Activated CD4-positive, alpha-beta T cell treated with anti-CD3 and anti-CD28 coated beads for 36 hours (primary cell): ENCODE measurements at regions of chr7 and their contacts with region 1.

Region 1: DNA sequence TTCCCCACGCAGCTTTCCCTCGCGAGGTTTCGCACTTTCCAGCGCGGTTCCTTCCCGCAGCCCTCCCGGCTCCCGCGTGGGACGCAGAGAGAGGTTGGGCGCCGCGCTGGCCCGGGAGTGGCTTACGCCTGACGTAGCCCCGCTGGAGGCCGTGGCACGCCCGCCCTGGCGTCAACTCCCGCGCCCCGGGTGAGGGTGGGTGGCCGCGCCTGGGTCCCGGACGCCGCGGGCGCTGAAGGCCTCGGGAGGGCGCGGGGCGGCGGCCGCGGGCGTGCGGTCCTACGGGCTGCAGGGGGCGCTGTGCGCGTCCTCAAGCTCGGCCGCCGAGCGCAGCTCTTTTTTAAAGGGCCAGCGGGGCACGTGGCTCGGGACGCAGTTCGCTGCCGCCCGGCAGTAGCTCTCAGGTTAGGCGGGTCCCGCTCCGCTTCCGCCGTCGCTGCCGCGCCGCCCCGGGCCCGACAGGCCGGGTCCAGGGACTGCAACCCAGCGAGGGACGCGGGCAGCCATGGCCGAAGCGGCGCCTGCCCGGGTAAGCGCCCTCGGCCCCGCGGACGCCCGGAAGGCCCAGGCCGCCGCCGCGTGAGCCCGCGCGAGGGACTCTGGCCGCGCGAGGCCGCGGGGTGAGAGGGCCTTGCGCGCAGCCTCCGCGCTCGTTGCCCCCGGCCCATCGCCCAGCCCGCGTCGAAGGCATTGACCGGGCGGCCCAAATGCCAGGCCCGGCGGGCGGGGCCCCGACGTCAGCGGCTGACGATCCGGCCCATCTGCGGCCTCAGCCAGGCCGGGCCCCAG is at the start of gene ZNF783:
- DNase-seq: peak; percentile 92
- ATAC-seq: peak; percentile 84
- H3K4me3 Mint-ChIP-seq: peak within 1 kb of the TSS; percentile 74
- H3K27ac Mint-ChIP-seq: peak within 1 kb of the TSS; percentile 96
- H3K4me1 Mint-ChIP-seq: peaks cover 40% of the 10 kb centered on the region
- H3K27me3 Mint-ChIP-seq: no peaks in the 10 kb centered on the region
- total RNA-seq, gene ZNF783: 14.5 to 15.4 TPM

Region 2: GRCh38 chr7:149090397-149091195 is 171.4 kb before region 1 on chr7 and contains the start of gene ZNF786:
- CTCF ChIA-PET with region 1: no interaction called
- POLR2A ChIA-PET with region 1: no interaction called
- intact Hi-C with region 1: loop called in 1 of 2 experiments (anchors 2 kb)
- DNase-seq: peak; percentile 97
- ATAC-seq: peak; percentile 87
- H3K4me3 Mint-ChIP-seq: peak within 1 kb of the TSS; percentile 89
- H3K27ac Mint-ChIP-seq: peak within 1 kb of the TSS; percentile 100
- H3K4me1 Mint-ChIP-seq: peaks cover 19% of the 10 kb centered on the region
- H3K27me3 Mint-ChIP-seq: no peaks in the 10 kb centered on the region
- total RNA-seq, gene ZNF786: 4.4 to 4.8 TPM

Region 3: GRCh38 chr7:149147072-149147751 is 114.8 kb before region 1 on chr7 and contains the start of gene ZNF398:
- CTCF ChIA-PET with region 1: interaction called, 7 read pairs
- POLR2A ChIA-PET with region 1: no interaction called
- intact Hi-C with region 1: loop called (anchors 1 to 5 kb)
- DNase-seq: peak; percentile 87
- ATAC-seq: peak; percentile 71
- H3K4me3 Mint-ChIP-seq: peak within 1 kb of the TSS; percentile 98
- H3K27ac Mint-ChIP-seq: peak within 1 kb of the TSS; percentile 99
- H3K4me1 Mint-ChIP-seq: peaks cover 34% of the 10 kb centered on the region
- H3K27me3 Mint-ChIP-seq: no peaks in the 10 kb centered on the region
- total RNA-seq, gene ZNF398: 9.6 to 10.5 TPM

Region 4: GRCh38 chr7:149239345-149240191 is 22.5 kb before region 1 on chr7 and contains the start of gene ZNF212:
- CTCF ChIA-PET with region 1: interaction called, 9 read pairs
- POLR2A ChIA-PET with region 1: interaction called, 8 read pairs
- intact Hi-C with region 1: loop called (anchors 1 to 2 kb)
- DNase-seq: peak; percentile 95
- ATAC-seq: peak; percentile 98
- H3K4me3 Mint-ChIP-seq: peak within 1 kb of the TSS; percentile 93
- H3K27ac Mint-ChIP-seq: peak within 1 kb of the TSS; percentile 83
- H3K4me1 Mint-ChIP-seq: peaks cover 32% of the 10 kb centered on the region
- H3K27me3 Mint-ChIP-seq: no peaks in the 10 kb centered on the region
- total RNA-seq, gene ZNF212: 9.9 to 15.9 TPM

Region 5: GRCh38 chr7:149284850-149285626 is 23.0 kb after region 1 on chr7:
- CTCF ChIA-PET with region 1: interaction called, 21 read pairs
- POLR2A ChIA-PET with region 1: interaction called, 14 read pairs
- intact Hi-C with region 1: loop called (anchors 1 to 2 kb)
- DNase-seq: peak; percentile 99
- ATAC-seq: peak; percentile 99
- H3K4me3 Mint-ChIP-seq: peak overlapping the region; percentile 84
- H3K27ac Mint-ChIP-seq: peak overlapping the region; percentile 61
- H3K4me1 Mint-ChIP-seq: peaks cover 38% of the 10 kb centered on the region
- H3K27me3 Mint-ChIP-seq: no peaks in the 10 kb centered on the region

Region 6: DNA sequence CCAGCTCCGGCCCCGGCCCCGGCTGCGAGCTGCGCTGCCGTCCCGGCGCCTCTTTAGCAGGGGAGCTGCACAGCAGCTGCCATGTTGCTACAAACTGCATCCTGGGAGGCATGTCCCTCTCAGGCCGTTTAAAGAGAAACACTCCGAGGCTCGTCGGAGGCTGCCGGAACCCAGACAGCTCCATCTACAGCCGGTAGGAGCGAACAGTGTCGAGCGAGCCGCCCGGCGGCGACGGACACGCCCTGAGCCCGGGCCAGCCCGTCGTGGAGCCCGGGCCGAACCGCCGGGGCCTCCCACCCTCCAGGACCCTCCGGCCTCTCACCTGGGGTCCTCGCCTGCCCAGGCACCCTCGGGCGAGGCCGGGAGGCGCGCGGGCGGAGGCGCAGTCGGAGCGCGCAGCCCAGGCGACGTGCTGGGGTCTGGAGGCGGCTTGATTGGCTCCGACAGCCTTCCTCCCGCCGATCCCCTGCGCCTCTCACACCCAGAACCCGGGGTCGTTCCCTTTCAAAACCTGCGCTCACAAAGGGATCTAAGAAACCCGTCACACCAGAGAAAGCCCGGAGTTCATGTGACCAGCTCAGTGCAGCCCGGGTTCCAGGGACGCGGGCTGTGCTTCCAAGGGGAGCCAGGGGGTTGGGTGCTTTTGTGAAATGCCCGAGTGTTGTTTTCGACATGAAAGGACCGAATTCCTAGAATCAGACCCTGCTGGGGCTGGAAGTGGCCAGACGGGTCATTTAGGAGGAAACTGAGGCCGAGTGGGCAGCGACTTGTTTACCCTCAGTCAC is 198.7 kb after region 1 on chr7 and contains the start of gene ZNF777:
- CTCF ChIA-PET with region 1: no interaction called
- POLR2A ChIA-PET with region 1: interaction called, 3 read pairs
- intact Hi-C with region 1: loop called in 1 of 2 experiments (anchors 1 kb)
- DNase-seq: peak; percentile 90
- ATAC-seq: peak; percentile 96
- H3K4me3 Mint-ChIP-seq: peak within 1 kb of the TSS; percentile 84
- H3K27ac Mint-ChIP-seq: peak within 1 kb of the TSS; percentile 87
- H3K4me1 Mint-ChIP-seq: peaks cover 21% of the 10 kb centered on the region
- H3K27me3 Mint-ChIP-seq: peaks cover 10% of the 10 kb centered on the region
- total RNA-seq, gene ZNF777: 13.3 to 16.4 TPM

Region 7: DNA sequence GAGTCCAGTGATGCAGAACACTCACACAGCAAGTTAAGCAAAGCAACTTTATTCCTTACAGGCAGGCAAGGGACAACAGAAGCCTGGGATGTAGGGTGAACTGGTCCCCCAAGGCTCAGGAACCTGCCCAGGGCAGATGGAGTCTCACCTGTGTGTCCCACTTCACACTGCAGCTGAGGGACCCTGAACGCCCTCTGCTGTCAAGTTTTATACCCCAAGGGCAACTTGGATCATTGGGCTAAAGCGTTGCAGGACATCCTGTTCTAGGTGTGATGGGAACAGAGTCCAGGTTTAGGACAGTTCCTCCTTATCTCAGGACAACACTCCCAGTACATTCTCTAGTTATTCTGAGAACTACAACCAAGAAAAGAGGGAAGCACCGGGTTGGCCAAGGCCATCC is 285.1 kb after region 1 on chr7:
- CTCF ChIA-PET with region 1: no interaction called
- POLR2A ChIA-PET with region 1: no interaction called
- intact Hi-C with region 1: no loop called
- DNase-seq: no peak
- ATAC-seq: no peak
- H3K4me3 Mint-ChIP-seq: no peak overlapping the region
- H3K27ac Mint-ChIP-seq: no peak overlapping the region
- H3K4me1 Mint-ChIP-seq: peaks cover 9% of the 10 kb centered on the region
- H3K27me3 Mint-ChIP-seq: no peaks in the 10 kb centered on the region